PC-9 (cell line): ENCODE measurements at regions of chr16 and their contacts with region 1.

Region 1: DNA sequence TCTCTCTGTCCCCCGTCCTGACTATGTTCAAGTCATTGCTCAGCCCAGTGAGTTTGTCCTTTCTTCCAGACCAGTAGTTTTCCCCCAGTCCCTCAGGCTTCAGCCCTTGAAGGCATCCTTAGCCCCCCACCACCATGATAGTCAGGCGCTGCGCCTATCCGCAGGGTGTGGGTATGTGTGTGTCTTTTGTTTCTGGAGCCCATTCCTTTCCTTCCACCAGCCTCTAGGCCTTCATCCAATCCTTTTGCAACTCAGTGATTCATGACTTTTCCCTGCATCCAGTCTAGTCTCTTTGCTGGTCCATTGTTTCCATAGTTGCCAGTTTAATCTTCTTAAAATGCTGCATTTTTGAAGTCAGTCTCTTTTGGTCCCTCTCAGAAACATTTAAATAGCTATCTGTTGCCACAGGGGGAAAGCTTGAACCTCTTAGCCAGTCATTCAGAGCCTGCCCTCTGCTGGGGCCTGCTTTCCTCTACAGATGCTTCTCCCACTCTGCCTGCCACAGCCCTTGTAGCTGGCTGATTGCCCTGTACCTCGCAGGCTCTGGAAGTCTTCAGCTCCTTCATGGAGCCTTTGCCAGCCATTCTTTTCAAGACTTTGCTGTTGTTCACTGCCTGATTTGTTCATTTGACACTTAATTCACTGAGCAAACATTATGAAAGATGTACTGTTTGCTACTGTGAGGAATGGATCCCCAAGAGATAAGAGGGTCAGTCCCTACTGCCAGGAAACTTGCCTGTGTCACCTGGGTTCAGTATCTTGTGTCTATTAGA is 55.9 kb upstream of the ADCY7 start:
- DNase-seq: peak; percentile 53 to 55
- H3K4me3 ChIP-seq: no peak overlapping the region
- H3K27ac ChIP-seq: no peak overlapping the region
- H3K4me1 ChIP-seq: no peaks in the 10 kb centered on the region
- H3K27me3 ChIP-seq: no peaks in the 10 kb centered on the region
- CTCF ChIP-seq: peak; percentile 68

Region 2: GRCh38 chr16:50065624-50066481 is 144.6 kb before region 1 on chr16 and contains the start of gene HEATR3:
- CTCF ChIA-PET with region 1: interaction called, 6 read pairs
- POLR2A ChIA-PET with region 1: no interaction called
- intact Hi-C with region 1: loop called (anchors 1 kb)
- DNase-seq: peak; percentile 70 to 91
- H3K4me3 ChIP-seq: peak within 1 kb of the TSS; percentile 94
- H3K27ac ChIP-seq: peak within 1 kb of the TSS; percentile 66
- H3K4me1 ChIP-seq: peaks cover 15% of the 10 kb centered on the region; the same call in 1 of the 2 replicates
- H3K27me3 ChIP-seq: no peaks in the 10 kb centered on the region
- CTCF ChIP-seq: no peak
- total RNA-seq, gene HEATR3: 11.5 and 14.3 TPM in 2 replicates

Region 3: GRCh38 chr16:50297301-50298067 is 87.0 kb after region 1 on chr16:
- CTCF ChIA-PET with region 1: no interaction called
- POLR2A ChIA-PET with region 1: no interaction called
- intact Hi-C with region 1: no loop called
- DNase-seq: no peak
- H3K4me3 ChIP-seq: no peak overlapping the region
- H3K27ac ChIP-seq: no peak overlapping the region
- H3K4me1 ChIP-seq: no peaks in the 10 kb centered on the region
- H3K27me3 ChIP-seq: no peaks in the 10 kb centered on the region
- CTCF ChIP-seq: no peak

Region 4: DNA sequence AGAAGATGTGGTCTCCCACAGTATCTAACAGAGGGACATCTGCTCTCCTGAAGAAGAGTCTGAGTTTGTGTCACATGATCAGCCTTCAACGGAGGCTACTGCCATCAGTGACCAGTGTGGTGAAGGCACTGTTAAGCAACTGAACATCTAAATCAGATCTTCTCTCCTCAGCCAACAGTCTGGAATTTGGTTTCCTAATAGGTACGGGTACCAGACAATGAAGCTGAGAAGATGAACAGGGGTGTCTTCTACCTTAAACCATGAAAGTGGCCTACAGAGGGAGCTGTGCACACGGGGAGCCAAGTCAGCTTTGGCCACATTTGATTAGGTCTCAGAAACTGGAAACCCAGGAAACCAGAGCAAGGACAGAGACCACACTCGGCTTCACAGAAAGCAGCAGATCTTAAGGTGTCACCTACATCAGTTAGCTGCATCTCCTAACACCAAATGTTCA is 116.5 kb after region 1 on chr16:
- CTCF ChIA-PET with region 1: no interaction called
- POLR2A ChIA-PET with region 1: no interaction called
- intact Hi-C with region 1: loop called (anchors 10 kb)
- DNase-seq: no peak
- H3K4me3 ChIP-seq: no peak overlapping the region
- H3K27ac ChIP-seq: no peak overlapping the region
- H3K4me1 ChIP-seq: no peaks in the 10 kb centered on the region
- H3K27me3 ChIP-seq: no peaks in the 10 kb centered on the region
- CTCF ChIP-seq: peak; percentile 57

Region 5: DNA sequence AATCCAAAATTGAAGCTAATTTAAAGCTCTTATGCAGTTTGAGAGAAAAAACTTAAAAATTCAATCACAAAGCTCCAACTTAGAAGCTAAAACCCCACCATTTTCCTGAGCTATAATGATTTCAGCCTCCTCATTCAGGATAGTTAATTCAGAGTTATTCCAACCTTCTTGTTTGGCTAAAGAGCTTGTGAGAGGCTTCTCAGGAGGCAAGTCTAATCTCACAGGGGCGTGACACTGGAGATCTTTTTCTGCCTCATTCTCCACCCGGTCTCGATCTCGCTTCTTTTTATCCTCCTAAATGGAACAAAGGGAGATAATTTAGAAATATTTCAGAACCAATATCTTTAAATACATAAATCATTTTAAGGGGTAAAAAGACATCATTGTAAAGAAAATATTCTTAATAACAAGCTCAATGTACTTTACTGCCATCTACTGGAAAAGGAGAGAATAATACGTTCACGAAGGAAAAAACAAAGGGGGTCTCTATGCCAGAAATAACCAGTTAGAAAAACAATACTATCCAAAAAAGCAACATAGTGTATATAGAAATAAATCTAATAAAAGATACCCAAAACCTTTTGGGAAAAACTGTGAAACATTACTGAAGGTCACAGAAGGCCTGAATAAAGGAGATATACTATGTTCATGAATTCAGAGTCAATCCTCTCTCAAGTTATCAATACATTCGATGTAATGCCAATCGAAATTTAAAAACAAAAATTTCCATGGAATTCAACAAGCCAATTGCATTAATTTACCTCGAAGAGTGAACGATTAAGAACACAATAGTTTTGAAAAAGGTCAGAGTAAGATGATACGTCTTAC is 144.4 kb after region 1 on chr16:
- CTCF ChIA-PET with region 1: no interaction called
- POLR2A ChIA-PET with region 1: no interaction called
- intact Hi-C with region 1: loop called (anchors 1 kb)
- DNase-seq: no peak
- H3K4me3 ChIP-seq: no peak overlapping the region
- H3K27ac ChIP-seq: no peak overlapping the region
- H3K4me1 ChIP-seq: no peaks in the 10 kb centered on the region
- H3K27me3 ChIP-seq: no peaks in the 10 kb centered on the region
- CTCF ChIP-seq: peak; percentile 83

Region 6: GRCh38 chr16:50478761-50479125 is 268.3 kb after region 1 on chr16:
- CTCF ChIA-PET with region 1: no interaction called
- POLR2A ChIA-PET with region 1: interaction called, 23 read pairs
- intact Hi-C with region 1: no loop called
- DNase-seq: peak in 1 of 2 experiments; percentile 37
- H3K4me3 ChIP-seq: no peak overlapping the region
- H3K27ac ChIP-seq: no peak overlapping the region
- H3K4me1 ChIP-seq: peaks cover 5% of the 10 kb centered on the region
- H3K27me3 ChIP-seq: no peaks in the 10 kb centered on the region
- CTCF ChIP-seq: no peak

Region 7: GRCh38 chr16:50665128-50665878 is 454.9 kb after region 1 on chr16:
- CTCF ChIA-PET with region 1: no interaction called
- POLR2A ChIA-PET with region 1: no interaction called
- intact Hi-C with region 1: loop called (anchors 2 kb)
- DNase-seq: peak; percentile 51 to 79
- H3K4me3 ChIP-seq: peak overlapping the region; percentile 45; the same call in 1 of the 2 replicates
- H3K27ac ChIP-seq: no peak overlapping the region
- H3K4me1 ChIP-seq: peaks cover 14% of the 10 kb centered on the region
- H3K27me3 ChIP-seq: no peaks in the 10 kb centered on the region
- CTCF ChIP-seq: peak; percentile 93